Right ventricle myocardium inferior (tissue), 1 donor: ENCODE measurements at regions of chr2 and their contacts with region 1.

Region 1: DNA sequence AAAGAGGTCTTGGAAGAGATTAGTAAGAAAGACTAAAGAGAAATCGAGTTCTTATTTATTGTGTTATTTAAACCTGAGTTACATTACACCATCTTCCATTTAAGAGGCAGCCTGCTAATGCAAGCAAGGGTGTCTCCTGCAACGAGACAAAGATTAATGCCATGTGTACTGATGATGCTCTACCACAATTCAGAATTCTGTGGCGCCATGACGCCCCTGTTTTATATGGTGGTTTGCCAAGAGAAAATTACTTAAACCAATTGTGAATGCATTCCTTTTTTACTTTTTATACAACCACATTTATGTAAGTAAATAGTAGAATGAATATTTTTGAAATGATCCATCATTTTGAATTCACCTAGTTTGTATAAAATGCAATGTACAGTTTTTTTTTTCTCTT is 356.1 kb upstream of the ZEB2 start:
- DNase-seq: no peak
- ATAC-seq: no peak

Region 2: DNA sequence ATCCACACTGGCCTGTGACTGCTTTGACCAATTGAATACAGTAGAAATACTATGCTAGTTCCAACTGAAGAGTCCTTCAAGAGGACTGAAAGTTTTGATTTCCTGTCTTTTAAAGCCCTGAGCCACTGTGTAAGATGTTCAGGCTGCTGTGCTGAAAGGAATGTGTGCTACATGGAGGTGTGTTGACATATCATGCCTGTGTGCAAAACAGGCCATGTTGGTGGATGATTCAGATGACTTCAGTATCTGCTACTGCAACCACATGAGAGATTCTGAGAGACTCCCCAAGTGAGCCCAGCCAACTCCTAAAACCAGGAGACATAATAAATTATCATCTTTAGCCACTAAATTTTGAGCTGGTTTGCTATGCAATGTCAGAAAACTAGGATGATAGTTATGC is 1019.0 kb before region 1 on chr2:
- intact Hi-C with region 1: no loop called
- DNase-seq: no peak
- ATAC-seq: no peak

Region 3: DNA sequence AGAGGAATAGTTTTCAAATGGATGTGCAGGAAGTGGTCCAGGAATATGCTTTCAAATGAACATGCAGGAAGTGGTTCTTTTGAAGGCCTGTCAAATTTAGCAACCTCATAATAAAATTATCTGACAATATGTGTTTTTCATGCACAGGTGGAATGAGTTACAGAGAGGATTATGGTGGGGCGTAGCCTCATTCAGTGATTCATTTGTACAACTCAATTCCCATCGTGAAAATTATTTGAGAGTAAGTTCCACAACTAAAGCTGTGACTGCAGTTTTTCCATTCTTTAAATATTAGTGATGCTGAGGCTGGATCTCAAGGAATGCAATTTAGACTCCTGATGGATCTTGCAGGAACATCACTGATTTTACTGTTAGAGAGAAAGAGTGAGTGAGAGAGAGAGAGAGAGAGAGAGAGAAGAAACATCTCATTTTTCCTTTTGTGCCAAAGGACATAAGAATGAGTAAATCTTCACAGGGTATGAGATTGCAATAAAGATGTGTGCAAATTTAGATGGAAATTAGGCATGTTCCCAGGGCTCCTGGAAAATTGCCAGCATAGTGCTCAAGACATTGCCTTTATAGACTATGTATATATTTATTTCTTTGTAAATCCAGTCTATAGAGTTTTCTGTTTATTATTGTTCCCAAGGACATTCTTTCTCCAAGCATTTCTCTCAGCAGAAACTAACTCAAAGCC is 38.8 kb after region 1 on chr2:
- intact Hi-C with region 1: no loop called
- DNase-seq: no peak
- ATAC-seq: no peak

Region 4: DNA sequence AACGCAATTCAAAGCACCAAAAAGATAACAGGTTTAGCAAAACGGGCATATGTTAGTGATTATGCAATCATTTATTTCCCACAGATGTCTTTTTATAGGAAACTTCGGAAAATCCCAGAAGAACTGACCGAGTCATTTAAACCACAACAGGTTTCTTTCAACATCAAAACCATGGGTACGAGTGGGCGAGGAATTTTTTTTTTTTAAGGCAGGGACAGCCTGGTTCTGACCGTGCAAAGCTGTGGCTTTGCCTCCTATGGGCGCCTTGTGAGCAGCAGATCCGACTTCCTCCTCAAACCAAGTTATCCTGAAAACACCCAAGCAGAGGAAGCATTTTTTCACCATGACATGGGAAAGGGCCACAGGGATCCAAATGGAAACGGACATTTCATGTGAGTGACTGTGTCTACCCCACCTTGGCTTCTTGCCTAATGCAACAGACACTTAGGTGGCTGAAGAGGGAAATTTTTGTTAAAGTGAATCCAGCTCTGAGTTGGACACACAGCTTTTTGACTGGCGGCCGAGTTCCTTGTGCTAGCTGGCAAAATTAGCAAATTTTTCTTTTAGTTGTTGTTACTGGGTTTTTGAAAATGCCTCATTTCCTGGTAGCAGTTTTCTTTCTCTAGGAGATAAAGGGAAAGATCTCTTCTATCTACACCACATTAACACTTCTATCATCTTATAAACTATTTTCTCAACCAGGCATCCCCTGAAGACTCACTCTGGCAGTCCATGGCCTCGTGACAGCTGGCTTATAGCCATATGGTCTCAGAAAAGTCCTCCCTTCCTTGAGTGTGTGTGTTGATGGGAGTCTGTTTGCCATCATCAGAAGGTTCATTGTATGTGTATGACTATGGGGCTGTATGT is 131.3 kb after region 1 on chr2:
- intact Hi-C with region 1: loop called (anchors 10 kb)
- DNase-seq: peak; percentile 72
- ATAC-seq: peak; percentile 64

Region 5: GRCh38 chr2:145199042-145199441 is 323.0 kb after region 1 on chr2:
- intact Hi-C with region 1: no loop called
- DNase-seq: no peak
- ATAC-seq: peak; percentile 81